ENCODE measurements at regions of chr17 and their contacts with region 1.

Region 1: DNA sequence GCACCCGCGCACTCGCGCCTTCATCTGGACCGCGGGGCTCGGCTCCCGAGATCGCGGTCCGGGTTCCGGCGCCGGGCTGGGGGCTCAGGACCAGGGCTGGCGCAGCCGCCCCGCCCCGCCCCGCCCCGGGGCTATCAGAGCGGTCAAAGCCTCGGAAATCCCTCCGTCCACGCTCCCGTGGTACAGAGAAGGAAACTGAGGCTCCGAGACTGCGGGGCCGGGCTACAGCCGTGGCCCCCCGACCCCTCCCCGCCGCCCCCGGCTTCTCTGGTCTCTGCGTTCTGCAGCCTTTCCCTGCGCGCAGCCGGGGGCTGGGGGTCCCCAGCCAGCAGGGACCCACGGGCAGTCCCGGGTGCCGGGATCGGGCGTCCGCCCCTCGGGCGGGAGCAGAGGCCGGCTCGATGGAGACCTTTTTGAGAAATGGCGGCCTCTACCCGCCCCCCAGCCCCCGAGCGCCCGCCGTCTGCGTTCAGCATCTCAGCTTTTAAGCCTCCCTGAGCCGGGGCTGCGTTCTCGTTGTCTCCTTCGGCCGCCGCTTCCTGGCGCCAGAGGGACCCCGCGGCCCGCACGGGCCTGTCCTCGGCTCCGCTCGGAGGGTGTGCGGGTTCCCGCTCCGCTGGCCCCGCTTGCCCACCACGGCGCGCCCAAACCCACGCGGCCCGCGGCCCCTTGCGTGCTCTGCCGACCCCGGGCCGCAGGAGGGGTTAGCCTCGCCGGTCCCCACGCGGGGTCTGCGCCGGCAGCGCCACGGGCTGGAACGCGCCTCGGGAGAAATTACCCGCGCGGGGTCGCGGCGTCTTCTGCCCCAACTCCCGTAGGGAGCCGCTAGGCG is 1.5 kb upstream of the NPTX1 start:
- DNase-seq: peak in 18 of 35 experiments; percentile 9 to 56 (median 28)
- ATAC-seq: peak; percentile 45 to 59 (median 56)
- H3K4me3 ChIP-seq: peak overlapping the region in 1 of 2 donors; percentile 48
- H3K4me3 Mint-ChIP-seq: peak overlapping the region in 1 of 3 donors; percentile 67
- H3K27ac ChIP-seq: no peak overlapping the region
- H3K27ac Mint-ChIP-seq: no peak overlapping the region
- H3K4me1 ChIP-seq: peaks cover 4 to 47% of the 10 kb centered on the region in 2 experiments
- H3K4me1 Mint-ChIP-seq: peaks cover 15 to 21% (median 21%) of the 10 kb centered on the region in 3 donors
- H3K27me3 ChIP-seq: peaks cover 9 to 88% of the 10 kb centered on the region in 2 experiments
- H3K27me3 Mint-ChIP-seq: peaks cover 46 to 68% of the 10 kb centered on the region in 2 donors

Region 2: DNA sequence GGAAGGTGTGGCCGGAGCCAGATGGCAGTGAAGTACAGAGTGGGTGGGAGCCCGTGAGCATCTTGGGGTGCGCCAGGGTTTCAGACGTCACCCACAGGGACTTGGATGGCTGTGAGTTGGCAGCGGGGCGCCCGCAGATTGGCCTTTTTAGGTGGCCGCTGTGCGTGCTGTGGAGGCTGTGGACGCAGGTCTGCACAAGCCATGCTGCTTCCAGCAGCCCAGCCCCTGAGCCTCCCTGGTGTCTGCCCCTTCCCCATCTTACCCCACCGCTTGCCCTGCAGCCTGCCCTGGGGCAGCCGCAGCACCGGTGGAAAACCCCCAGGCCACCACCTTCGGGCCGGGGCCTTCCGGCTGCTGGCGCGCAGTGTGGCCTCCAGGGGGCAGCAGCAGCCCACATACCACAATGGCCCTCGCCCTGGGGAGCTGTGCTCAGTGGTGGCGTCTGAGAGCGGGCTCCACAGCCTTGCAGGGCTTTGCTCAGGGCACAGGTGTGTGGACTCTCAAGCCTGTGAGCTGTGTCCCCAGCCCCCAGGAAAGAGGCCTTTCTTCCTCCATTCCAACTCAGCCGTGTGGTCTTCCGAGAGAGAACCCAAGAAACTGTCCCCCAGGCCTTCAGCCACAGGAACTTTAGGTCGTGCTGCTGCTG is 51.1 kb before region 1 on chr17:
- CTCF ChIA-PET with region 1: no interaction called
- POLR2A ChIA-PET with region 1: no interaction called
- DNase-seq: peak; percentile 70 to 93 (median 84)
- ATAC-seq: peak; percentile 91 to 98 (median 96)
- H3K4me3 ChIP-seq: no peak overlapping the region
- H3K4me3 Mint-ChIP-seq: no peak overlapping the region
- H3K27ac ChIP-seq: no peak overlapping the region
- H3K27ac Mint-ChIP-seq: no peak overlapping the region
- H3K4me1 ChIP-seq: peaks cover 0 to 25% of the 10 kb centered on the region in 2 experiments
- H3K4me1 Mint-ChIP-seq: peaks cover 4 to 18% (median 8%) of the 10 kb centered on the region in 3 donors
- H3K27me3 ChIP-seq: peaks cover 0 to 34% of the 10 kb centered on the region in 2 experiments
- H3K27me3 Mint-ChIP-seq: peaks cover 0 to 1% of the 10 kb centered on the region in 2 donors

Region 3: DNA sequence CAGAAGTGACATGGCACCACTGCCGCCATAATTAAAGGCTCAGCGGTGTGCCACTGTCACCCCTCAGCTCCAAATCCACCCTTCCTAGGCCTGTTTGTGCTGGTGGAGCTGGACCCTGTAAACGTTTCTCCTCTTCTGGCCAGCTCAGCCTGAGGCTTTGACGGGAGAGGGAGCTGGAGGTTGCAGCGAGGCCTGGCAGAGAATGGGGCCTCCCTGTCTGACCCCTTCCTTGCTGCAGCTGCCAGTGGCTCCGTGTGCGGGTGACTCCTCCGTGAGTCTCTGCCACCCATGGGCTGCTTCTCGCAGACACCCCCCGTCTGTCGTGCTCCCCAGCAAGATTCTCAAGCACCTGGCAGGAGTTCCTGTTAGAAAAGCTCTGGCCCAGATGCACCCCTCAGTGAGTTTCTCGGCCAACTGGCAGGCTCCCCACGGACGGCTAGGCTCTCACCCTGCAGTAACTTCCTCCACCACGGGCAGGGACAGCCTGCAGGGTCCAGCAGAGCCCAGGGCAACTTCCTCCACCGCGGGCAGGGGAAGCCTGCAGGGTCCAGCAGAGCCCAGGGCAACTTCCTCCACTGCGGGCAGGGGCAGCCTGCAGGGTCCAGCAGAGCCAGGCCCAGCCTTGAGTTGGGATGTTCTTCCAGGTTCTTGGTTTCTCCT is 509.1 kb after region 1 on chr17:
- CTCF ChIA-PET with region 1: interaction called in 1 of 2 experiments, 13 read pairs
- POLR2A ChIA-PET with region 1: no interaction called
- DNase-seq: no peak
- ATAC-seq: no peak
- H3K4me3 ChIP-seq: no peak overlapping the region
- H3K4me3 Mint-ChIP-seq: no peak overlapping the region
- H3K27ac ChIP-seq: no peak overlapping the region
- H3K27ac Mint-ChIP-seq: no peak overlapping the region
- H3K4me1 ChIP-seq: peaks cover 0 to 19% of the 10 kb centered on the region in 2 experiments
- H3K4me1 Mint-ChIP-seq: peaks cover 10 to 23% (median 12%) of the 10 kb centered on the region in 3 donors
- H3K27me3 ChIP-seq: peaks cover 0 to 44% of the 10 kb centered on the region in 2 experiments
- H3K27me3 Mint-ChIP-seq: peaks cover 0 to 5% of the 10 kb centered on the region in 2 donors